ENCODE measurements at regions of chr15 and their contacts with region 1.

Region 1: GRCh38 chr15:60717008-60717407 is 238.1 kb upstream of the ICE2 start:
- DNase-seq: no peak
- H3K4me3 ChIP-seq: no peak overlapping the region
- H3K27ac ChIP-seq: no peak overlapping the region
- H3K4me1 ChIP-seq: no peaks in the 10 kb centered on the region
- H3K27me3 ChIP-seq: no peaks in the 10 kb centered on the region
- CTCF ChIP-seq: no peak

Region 2: DNA sequence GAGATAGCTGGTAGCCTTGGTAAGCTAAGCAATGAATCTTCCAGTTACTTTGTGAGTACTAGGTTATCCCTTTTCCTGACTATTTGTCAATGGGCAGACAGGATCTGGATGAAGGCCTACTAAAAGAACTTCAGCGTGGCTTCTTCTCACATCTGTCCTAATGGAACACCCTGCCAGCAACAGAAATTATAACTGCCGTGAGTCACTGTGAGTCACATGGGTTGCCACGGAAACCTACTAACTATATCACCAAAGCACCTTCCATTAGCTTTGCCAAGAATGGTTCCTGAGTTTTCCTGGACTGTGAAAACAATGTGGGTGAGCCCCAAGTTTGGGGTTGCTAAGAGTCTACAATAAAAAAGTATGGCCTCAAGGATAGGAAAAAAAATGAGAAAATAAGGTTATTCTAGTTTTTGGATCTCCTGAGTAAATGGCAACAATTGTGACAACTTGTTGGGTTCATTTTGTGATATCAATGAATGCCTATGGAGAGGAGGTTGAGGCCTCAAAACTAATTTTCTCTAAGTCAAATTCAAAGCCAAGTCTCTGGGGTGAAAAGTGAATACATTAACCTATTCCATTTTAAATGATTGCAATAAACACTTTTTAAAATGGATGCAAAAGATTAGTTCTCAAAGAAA is 43.0 kb before region 1 on chr15:
- CTCF ChIA-PET with region 1: no interaction called
- POLR2A ChIA-PET with region 1: interaction called, 21 read pairs
- intact Hi-C with region 1: no loop called
- DNase-seq: peak; percentile 60 to 81
- H3K4me3 ChIP-seq: no peak overlapping the region
- H3K27ac ChIP-seq: no peak overlapping the region
- H3K4me1 ChIP-seq: peaks cover 9% of the 10 kb centered on the region
- H3K27me3 ChIP-seq: no peaks in the 10 kb centered on the region
- CTCF ChIP-seq: no peak